ENCODE measurements at regions of chr4 and their contacts with region 1.

Region 1: GRCh38 chr4:109826719-109827118 is 1.1 kb upstream of the RRH start:
- DNase-seq: peak in 3 of 14 experiments; percentile 39 to 43 (median 41)
- ATAC-seq: peak; percentile 62
- H3K4me3 ChIP-seq: no peak overlapping the region
- H3K4me3 Mint-ChIP-seq: no peak overlapping the region
- H3K27ac ChIP-seq: no peak overlapping the region
- H3K27ac Mint-ChIP-seq: no peak overlapping the region
- H3K4me1 ChIP-seq: no peaks in the 10 kb centered on the region
- H3K4me1 Mint-ChIP-seq: no peaks in the 10 kb centered on the region
- H3K27me3 ChIP-seq: no peaks in the 10 kb centered on the region
- H3K27me3 Mint-ChIP-seq: no peaks in the 10 kb centered on the region
- CTCF ChIP-seq: peak; percentile 64

Region 2: DNA sequence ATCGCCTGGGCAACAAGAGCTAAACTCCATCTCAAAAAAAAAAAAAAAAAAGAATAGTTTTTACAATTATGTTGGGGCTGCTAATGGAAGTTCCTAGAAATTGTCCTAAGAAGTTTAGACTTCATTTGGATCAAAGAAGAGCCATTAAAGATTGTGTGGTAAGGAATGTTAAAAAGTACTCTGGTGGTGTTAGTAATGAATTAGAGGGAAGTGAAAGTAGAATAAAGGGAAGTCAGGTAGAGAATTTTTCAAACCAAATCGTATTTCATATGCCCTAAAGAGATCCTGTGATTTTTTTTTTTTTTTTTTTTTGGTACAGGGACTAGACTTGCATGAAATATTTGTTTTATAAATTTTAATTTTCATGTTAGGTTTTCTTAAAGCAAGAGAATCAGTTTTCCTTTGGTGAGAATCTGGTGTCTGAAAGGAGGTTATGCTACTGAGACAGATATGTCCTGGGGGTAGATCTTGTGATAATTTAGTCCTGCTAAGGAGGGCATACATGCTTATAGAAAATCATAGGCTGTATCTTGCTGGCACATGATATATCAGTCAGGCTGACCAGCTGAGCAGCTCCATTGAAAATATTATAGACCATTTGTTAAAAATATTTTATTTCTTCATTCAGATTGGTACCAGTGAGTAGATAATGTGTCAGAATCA is 382.4 kb before region 1 on chr4:
- CTCF ChIA-PET with region 1: no interaction called
- POLR2A ChIA-PET with region 1: no interaction called
- intact Hi-C with region 1: no loop called
- DNase-seq: no peak
- ATAC-seq: no peak
- H3K4me3 ChIP-seq: no peak overlapping the region
- H3K4me3 Mint-ChIP-seq: peak overlapping the region; percentile 8
- H3K27ac ChIP-seq: no peak overlapping the region
- H3K27ac Mint-ChIP-seq: no peak overlapping the region
- H3K4me1 ChIP-seq: peaks cover 22% of the 10 kb centered on the region
- H3K4me1 Mint-ChIP-seq: peaks cover 83% of the 10 kb centered on the region
- H3K27me3 ChIP-seq: no peaks in the 10 kb centered on the region
- H3K27me3 Mint-ChIP-seq: no peaks in the 10 kb centered on the region
- CTCF ChIP-seq: no peak

Region 3: DNA sequence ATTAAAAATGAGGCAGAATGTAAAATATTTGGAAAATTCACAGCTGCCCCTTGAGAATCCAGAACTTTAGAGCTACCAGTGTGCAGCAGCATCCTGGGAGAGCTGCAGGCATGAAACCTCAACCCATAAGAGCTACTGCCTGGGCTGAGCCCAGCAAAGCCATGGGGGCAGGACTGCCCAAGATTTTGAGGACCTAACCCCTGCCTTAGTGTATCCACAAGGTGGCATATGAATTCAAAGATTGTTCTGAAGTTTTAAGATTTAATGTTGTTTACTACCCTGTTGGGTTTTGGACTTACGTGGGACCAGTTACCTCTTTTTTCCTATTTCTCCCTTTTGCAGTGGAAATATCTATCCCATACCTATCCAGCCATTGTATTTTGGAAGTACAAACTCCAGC is 149.8 kb before region 1 on chr4:
- CTCF ChIA-PET with region 1: no interaction called
- POLR2A ChIA-PET with region 1: no interaction called
- intact Hi-C with region 1: loop called in 1 of 2 experiments (anchors 1 kb)
- DNase-seq: peak in 1 of 14 experiments; percentile 21
- ATAC-seq: no peak
- H3K4me3 ChIP-seq: no peak overlapping the region
- H3K4me3 Mint-ChIP-seq: no peak overlapping the region
- H3K27ac ChIP-seq: peak overlapping the region; percentile 13 to 14
- H3K27ac Mint-ChIP-seq: peak overlapping the region; percentile 71
- H3K4me1 ChIP-seq: no peaks in the 10 kb centered on the region
- H3K4me1 Mint-ChIP-seq: peaks cover 36% of the 10 kb centered on the region
- H3K27me3 ChIP-seq: no peaks in the 10 kb centered on the region
- H3K27me3 Mint-ChIP-seq: no peaks in the 10 kb centered on the region
- CTCF ChIP-seq: no peak

Region 4: GRCh38 chr4:109977854-109978501 is 151.3 kb after region 1 on chr4:
- CTCF ChIA-PET with region 1: no interaction called
- POLR2A ChIA-PET with region 1: no interaction called
- intact Hi-C with region 1: loop called in 1 of 2 experiments (anchors 5 kb)
- DNase-seq: peak in 3 of 14 experiments; percentile 42 to 43 (median 43)
- ATAC-seq: no peak
- H3K4me3 ChIP-seq: no peak overlapping the region
- H3K4me3 Mint-ChIP-seq: no peak overlapping the region
- H3K27ac ChIP-seq: no peak overlapping the region
- H3K27ac Mint-ChIP-seq: no peak overlapping the region
- H3K4me1 ChIP-seq: no peaks in the 10 kb centered on the region
- H3K4me1 Mint-ChIP-seq: no peaks in the 10 kb centered on the region
- H3K27me3 ChIP-seq: peaks cover 3 to 20% of the 10 kb centered on the region in 2 experiments
- H3K27me3 Mint-ChIP-seq: peaks cover 25% of the 10 kb centered on the region
- CTCF ChIP-seq: peak; percentile 73

Measured in CD4-positive, alpha-beta T cell (primary cell).